OCI-LY7 (cell line): ENCODE measurements at regions of chr1 and their contacts with region 1.

Region 1: DNA sequence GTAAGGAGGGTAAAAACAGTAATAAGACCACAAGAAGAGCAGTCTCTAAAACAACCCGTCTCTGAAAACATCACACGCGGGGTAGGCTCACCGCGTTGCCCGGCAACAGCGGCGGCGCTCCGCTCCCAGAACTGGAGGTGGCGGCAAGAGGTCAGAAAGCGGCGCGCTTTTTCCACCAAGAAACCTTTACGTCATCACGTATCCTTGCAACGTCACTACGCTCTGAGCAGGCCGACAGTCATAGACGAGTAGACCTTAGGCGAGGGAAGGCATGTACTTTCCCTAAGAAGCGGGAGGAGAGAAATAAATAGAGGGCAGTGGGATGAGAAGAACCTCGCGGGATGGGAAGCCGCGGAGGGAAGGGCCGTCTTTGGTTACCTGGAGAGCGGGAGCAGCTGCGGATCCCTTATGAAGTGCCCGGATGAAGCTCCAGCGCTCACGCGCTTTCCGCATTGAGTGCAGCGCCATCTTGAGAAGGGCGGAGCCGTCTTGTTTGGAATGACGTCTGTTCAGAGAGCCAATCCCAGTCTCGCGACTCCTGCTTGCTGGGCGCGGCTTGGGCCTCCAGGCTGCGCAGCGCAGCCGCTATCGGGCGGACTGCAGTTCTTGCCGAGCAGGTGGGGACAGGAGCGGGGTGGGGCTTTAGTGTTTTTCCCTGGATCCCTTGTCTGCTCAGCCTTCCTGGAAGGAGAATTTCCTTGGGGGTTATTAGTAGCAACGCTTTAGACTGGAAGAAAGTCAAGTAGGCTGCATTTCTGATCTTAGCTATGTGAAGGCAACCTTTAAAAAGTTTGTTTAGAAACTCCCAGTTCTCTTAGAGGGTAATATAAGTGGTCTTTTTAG is at the start of gene WARS2:
- DNase-seq: peak; percentile 99
- H3K4me3 ChIP-seq: peak within 1 kb of the TSS; percentile 75
- H3K27ac ChIP-seq: peak within 1 kb of the TSS; percentile 72
- H3K4me1 ChIP-seq: peaks cover 27% of the 10 kb centered on the region
- CTCF ChIP-seq: no peak; the same call in 1 of the 2 replicates
- total RNA-seq, gene WARS2: 8.9 and 11.0 TPM in 2 replicates

Region 2: GRCh38 chr1:119506951-119507350 is 366.6 kb after region 1 on chr1 and contains the start of gene HSD3B1:
- CTCF ChIA-PET with region 1: no interaction called
- POLR2A ChIA-PET with region 1: no interaction called
- intact Hi-C with region 1: no loop called
- DNase-seq: no peak
- H3K4me3 ChIP-seq: no peak within 1 kb of the TSS
- H3K27ac ChIP-seq: no peak within 1 kb of the TSS
- H3K4me1 ChIP-seq: no peaks in the 10 kb centered on the region
- CTCF ChIP-seq: no peak
- total RNA-seq, gene HSD3B1: not detected in 2 replicates

Region 3: GRCh38 chr1:119711804-119712341 is 571.5 kb after region 1 on chr1 and contains the start of gene PHGDH:
- CTCF ChIA-PET with region 1: no interaction called
- POLR2A ChIA-PET with region 1: interaction called, 3 read pairs
- intact Hi-C with region 1: loop called (anchors 10 kb)
- DNase-seq: peak; percentile 86
- H3K4me3 ChIP-seq: peak within 1 kb of the TSS; percentile 90
- H3K27ac ChIP-seq: peak within 1 kb of the TSS; percentile 66
- H3K4me1 ChIP-seq: peaks cover 29% of the 10 kb centered on the region
- CTCF ChIP-seq: no peak
- total RNA-seq, gene PHGDH: 283 and 287 TPM in 2 replicates